H1 (cell line): ENCODE measurements at regions of chr4 and their contacts with region 1.

Region 1: DNA sequence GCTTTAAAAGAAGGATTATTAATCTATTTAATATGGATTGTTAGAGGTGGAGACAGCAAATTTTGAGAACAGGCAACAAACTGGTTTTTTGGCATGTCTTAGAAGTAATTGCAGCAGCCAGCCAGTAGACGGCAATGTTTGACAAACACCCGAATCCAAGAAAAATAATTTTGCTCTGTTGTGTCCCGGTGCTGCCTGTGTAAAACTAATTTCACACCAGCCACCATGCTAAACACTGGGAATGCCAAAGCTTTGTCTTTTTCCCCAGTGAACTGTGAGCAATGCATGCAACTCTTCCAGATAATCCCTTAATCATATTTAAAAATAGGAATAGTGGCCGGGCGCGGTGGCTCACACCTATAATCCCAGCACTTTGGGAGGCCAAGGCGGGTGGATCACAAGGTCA is 25.9 kb downstream of the SMIM31 start:
- DNase-seq: peak; percentile 10 to 64
- H3K4me3 ChIP-seq: no peak overlapping the region
- H3K27ac ChIP-seq: no peak overlapping the region
- H3K4me1 ChIP-seq: peaks cover 0 to 3% (median 0%) of the 10 kb centered on the region in 4 experiments; a peak in 2 of 7 replicates
- H3K27me3 ChIP-seq: no peaks in the 10 kb centered on the region
- CTCF ChIP-seq: peak in 2 of 3 experiments; percentile 90 to 91; a peak in 3 of 4 replicates
- EP300 ChIP-seq: no peak
- POLR2A ChIP-seq: no peak
- RAD21 ChIP-seq: peak; percentile 94 to 97

Region 2: GRCh38 chr4:164731827-164732474 is 47.9 kb before region 1 on chr4:
- CTCF ChIA-PET with region 1: no interaction called
- POLR2A ChIA-PET with region 1: no interaction called
- DNase-seq: peak; percentile 17 to 82
- H3K4me3 ChIP-seq: no peak overlapping the region
- H3K27ac ChIP-seq: no peak overlapping the region
- H3K4me1 ChIP-seq: no peaks in the 10 kb centered on the region
- H3K27me3 ChIP-seq: no peaks in the 10 kb centered on the region
- CTCF ChIP-seq: peak; percentile 72 to 88 (median 84)
- EP300 ChIP-seq: no peak
- POLR2A ChIP-seq: no peak
- RAD21 ChIP-seq: peak; percentile 97

Region 3: DNA sequence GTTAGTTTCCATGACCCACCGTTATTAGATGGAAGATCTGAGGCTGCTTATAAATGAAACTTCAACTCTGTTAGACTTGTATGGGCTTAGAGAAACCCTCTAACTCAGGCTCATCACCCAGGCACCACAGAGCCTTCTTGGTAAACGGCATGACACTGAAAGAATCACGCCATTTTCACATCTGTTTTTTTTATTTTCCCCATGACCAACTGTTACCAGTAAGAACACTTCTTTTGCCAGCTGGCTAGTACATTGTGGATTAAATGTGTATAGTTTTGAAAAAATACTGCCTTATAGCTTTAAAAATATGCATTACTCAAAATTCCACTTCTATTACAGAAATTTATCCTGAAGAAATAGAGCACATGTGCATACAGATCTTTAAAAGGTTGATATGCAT is 49.1 kb after region 1 on chr4:
- CTCF ChIA-PET with region 1: interaction called, 10 read pairs
- POLR2A ChIA-PET with region 1: no interaction called
- DNase-seq: no peak
- H3K4me3 ChIP-seq: no peak overlapping the region
- H3K27ac ChIP-seq: no peak overlapping the region
- H3K4me1 ChIP-seq: no peaks in the 10 kb centered on the region; a peak in 2 of 7 replicates
- H3K27me3 ChIP-seq: no peaks in the 10 kb centered on the region
- CTCF ChIP-seq: no peak
- EP300 ChIP-seq: no peak
- POLR2A ChIP-seq: no peak
- RAD21 ChIP-seq: no peak

Region 4: GRCh38 chr4:164876700-164877324 is 97.0 kb after region 1 on chr4 and contains the start of gene APELA:
- CTCF ChIA-PET with region 1: interaction called, 11 read pairs
- POLR2A ChIA-PET with region 1: interaction called, 6 read pairs
- DNase-seq: no peak
- H3K4me3 ChIP-seq: peak within 1 kb of the TSS; percentile 30 to 90 (median 72)
- H3K27ac ChIP-seq: no peak within 1 kb of the TSS; the same call in 1 of the 2 replicates
- H3K4me1 ChIP-seq: peaks cover 0 to 13% (median 2%) of the 10 kb centered on the region in 4 experiments; a peak in 3 of 7 replicates
- H3K27me3 ChIP-seq: no peaks in the 10 kb centered on the region
- CTCF ChIP-seq: no peak
- EP300 ChIP-seq: no peak
- POLR2A ChIP-seq: peak in 1 of 2 experiments; percentile 35; a peak in 1 of 3 replicates
- RAD21 ChIP-seq: no peak
- total RNA-seq, gene APELA: 60.2 and 65.2 TPM in 2 replicates

Region 5: GRCh38 chr4:164888096-164888715 is 108.4 kb after region 1 on chr4:
- CTCF ChIA-PET with region 1: interaction called, 56 read pairs
- POLR2A ChIA-PET with region 1: interaction called, 20 read pairs
- DNase-seq: no peak
- H3K4me3 ChIP-seq: no peak overlapping the region
- H3K27ac ChIP-seq: no peak overlapping the region
- H3K4me1 ChIP-seq: peaks cover 0 to 6% (median 1%) of the 10 kb centered on the region in 4 experiments; a peak in 2 of 7 replicates
- H3K27me3 ChIP-seq: no peaks in the 10 kb centered on the region
- CTCF ChIP-seq: no peak
- EP300 ChIP-seq: no peak
- POLR2A ChIP-seq: peak in 1 of 2 experiments; percentile 44; a peak in 1 of 3 replicates
- RAD21 ChIP-seq: no peak

Region 6: GRCh38 chr4:164918956-164919355 is 139.1 kb after region 1 on chr4:
- CTCF ChIA-PET with region 1: interaction called, 48 read pairs
- POLR2A ChIA-PET with region 1: no interaction called
- DNase-seq: no peak
- H3K4me3 ChIP-seq: no peak overlapping the region
- H3K27ac ChIP-seq: no peak overlapping the region
- H3K4me1 ChIP-seq: no peaks in the 10 kb centered on the region
- H3K27me3 ChIP-seq: no peaks in the 10 kb centered on the region
- CTCF ChIP-seq: no peak
- EP300 ChIP-seq: no peak
- POLR2A ChIP-seq: no peak
- RAD21 ChIP-seq: no peak

Region 7: DNA sequence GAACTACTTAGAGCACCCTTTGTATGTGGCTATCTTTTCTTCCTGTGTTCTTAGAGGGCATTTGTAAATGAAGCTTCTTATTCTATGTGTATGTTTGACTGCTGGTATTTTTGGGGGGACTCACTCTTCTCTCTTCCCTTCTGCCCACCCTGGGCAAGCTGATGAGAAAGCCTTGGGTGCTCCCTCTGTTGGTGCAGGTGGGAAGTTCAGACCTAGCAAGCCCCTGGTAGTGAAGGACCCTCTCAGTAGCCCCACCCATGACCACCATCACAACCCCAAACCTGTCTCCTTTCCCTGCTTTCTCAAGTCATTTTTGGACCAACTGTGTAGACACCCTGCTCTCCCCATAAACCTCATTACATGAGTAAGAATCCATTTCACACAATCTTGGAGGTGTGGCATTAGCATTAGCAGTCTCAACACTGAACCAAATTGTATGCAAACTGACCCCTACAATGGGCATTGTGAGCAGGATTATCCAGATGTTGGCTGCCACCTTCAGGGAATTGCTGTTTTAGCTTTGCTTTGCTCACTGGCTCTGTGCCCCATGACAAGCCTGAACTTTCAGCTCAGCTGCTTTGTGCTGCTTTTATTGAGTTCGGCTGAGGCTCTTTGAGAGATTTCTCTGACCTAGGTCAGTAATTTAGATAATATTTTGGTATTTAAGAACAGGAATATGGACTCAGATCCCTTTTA is 169.8 kb after region 1 on chr4:
- CTCF ChIA-PET with region 1: interaction called, 42 read pairs
- POLR2A ChIA-PET with region 1: no interaction called
- DNase-seq: peak in 1 of 2 experiments; percentile 80
- H3K4me3 ChIP-seq: no peak overlapping the region
- H3K27ac ChIP-seq: no peak overlapping the region; the same call in 1 of the 2 replicates
- H3K4me1 ChIP-seq: no peaks in the 10 kb centered on the region
- H3K27me3 ChIP-seq: no peaks in the 10 kb centered on the region
- CTCF ChIP-seq: peak; percentile 59 to 76 (median 62)
- EP300 ChIP-seq: no peak
- POLR2A ChIP-seq: no peak
- RAD21 ChIP-seq: peak; percentile 57 to 66